PC-9 (cell line): ENCODE measurements at regions of chr12 and their contacts with region 1.

Region 1: GRCh38 chr12:62785941-62786559 is 148.9 kb downstream of the PPM1H start:
- DNase-seq: peak; percentile 70 to 100
- H3K4me3 ChIP-seq: peak overlapping the region; percentile 17; the same call in 1 of the 2 replicates
- H3K27ac ChIP-seq: peak overlapping the region; percentile 98
- H3K4me1 ChIP-seq: peaks cover 55% of the 10 kb centered on the region
- H3K27me3 ChIP-seq: no peaks in the 10 kb centered on the region
- CTCF ChIP-seq: no peak

Region 2: GRCh38 chr12:62724947-62725447 is 61.1 kb before region 1 on chr12:
- CTCF ChIA-PET with region 1: no interaction called
- POLR2A ChIA-PET with region 1: no interaction called
- intact Hi-C with region 1: loop called (anchors 2 kb)
- DNase-seq: peak; percentile 78 to 99
- H3K4me3 ChIP-seq: peak overlapping the region; percentile 1; the same call in 1 of the 2 replicates
- H3K27ac ChIP-seq: peak overlapping the region; percentile 99
- H3K4me1 ChIP-seq: peaks cover 71% of the 10 kb centered on the region
- H3K27me3 ChIP-seq: no peaks in the 10 kb centered on the region
- CTCF ChIP-seq: no peak

Region 3: GRCh38 chr12:62732861-62733427 is 53.1 kb before region 1 on chr12:
- CTCF ChIA-PET with region 1: no interaction called
- POLR2A ChIA-PET with region 1: interaction called, 8 read pairs
- intact Hi-C with region 1: loop called (anchors 2 kb)
- DNase-seq: peak; percentile 41 to 79
- H3K4me3 ChIP-seq: peak overlapping the region; percentile 18; the same call in 1 of the 2 replicates
- H3K27ac ChIP-seq: peak overlapping the region; percentile 96
- H3K4me1 ChIP-seq: peaks cover 86% of the 10 kb centered on the region
- H3K27me3 ChIP-seq: no peaks in the 10 kb centered on the region
- CTCF ChIP-seq: no peak

Region 4: DNA sequence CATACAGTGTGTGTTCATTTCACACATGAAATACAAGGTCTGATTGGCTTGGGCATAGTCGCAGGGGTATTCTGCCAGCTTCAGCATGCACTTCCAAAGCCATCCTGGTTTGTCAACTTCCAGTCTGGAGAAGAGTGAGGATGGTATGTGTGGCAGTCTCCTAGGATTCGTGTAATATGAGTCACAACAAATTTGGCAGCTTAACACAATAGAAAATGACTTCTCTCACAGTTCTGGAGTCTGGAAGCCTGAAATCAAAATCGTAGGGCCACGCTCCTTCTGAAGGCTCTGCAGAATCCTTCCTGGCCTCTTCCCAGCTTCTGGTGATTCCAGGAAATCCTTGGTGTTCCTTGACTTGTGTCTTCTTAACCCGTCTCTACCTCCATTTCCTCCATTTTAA is 18.6 kb before region 1 on chr12:
- CTCF ChIA-PET with region 1: no interaction called
- POLR2A ChIA-PET with region 1: interaction called, 10 read pairs
- intact Hi-C with region 1: no loop called
- DNase-seq: peak; percentile 20 to 58
- H3K4me3 ChIP-seq: no peak overlapping the region
- H3K27ac ChIP-seq: peak overlapping the region; percentile 38
- H3K4me1 ChIP-seq: peaks cover 45% of the 10 kb centered on the region
- H3K27me3 ChIP-seq: no peaks in the 10 kb centered on the region
- CTCF ChIP-seq: no peak

Region 5: GRCh38 chr12:62866451-62867082 is 80.5 kb after region 1 on chr12:
- CTCF ChIA-PET with region 1: no interaction called
- POLR2A ChIA-PET with region 1: no interaction called
- intact Hi-C with region 1: no loop called
- DNase-seq: peak; percentile 53 to 87
- H3K4me3 ChIP-seq: peak overlapping the region; percentile 19; the same call in 1 of the 2 replicates
- H3K27ac ChIP-seq: peak overlapping the region; percentile 85
- H3K4me1 ChIP-seq: peaks cover 53% of the 10 kb centered on the region
- H3K27me3 ChIP-seq: no peaks in the 10 kb centered on the region
- CTCF ChIP-seq: no peak

Region 6: DNA sequence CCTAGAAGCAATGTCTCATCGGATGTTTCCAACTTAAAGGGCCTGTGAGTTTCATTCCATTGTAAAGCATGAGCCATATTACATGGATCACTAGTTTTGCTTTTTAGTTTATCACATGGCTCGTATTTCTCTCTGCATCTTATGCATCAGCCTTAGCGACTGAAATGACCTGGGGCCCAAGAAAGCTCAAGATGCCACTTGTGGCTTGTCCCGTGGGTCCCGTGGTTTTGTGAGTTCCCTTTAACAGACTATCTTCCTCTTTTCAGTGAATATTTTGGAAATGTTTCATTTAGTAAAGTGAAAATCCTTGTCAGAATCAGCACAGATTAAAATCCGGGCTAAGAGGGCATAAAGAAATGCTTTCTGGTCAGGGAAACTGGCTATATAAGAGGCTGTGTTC is 235.1 kb after region 1 on chr12:
- CTCF ChIA-PET with region 1: no interaction called
- POLR2A ChIA-PET with region 1: no interaction called
- intact Hi-C with region 1: no loop called
- DNase-seq: no peak
- H3K4me3 ChIP-seq: no peak overlapping the region
- H3K27ac ChIP-seq: no peak overlapping the region
- H3K4me1 ChIP-seq: no peaks in the 10 kb centered on the region
- H3K27me3 ChIP-seq: no peaks in the 10 kb centered on the region
- CTCF ChIP-seq: no peak

Region 7: DNA sequence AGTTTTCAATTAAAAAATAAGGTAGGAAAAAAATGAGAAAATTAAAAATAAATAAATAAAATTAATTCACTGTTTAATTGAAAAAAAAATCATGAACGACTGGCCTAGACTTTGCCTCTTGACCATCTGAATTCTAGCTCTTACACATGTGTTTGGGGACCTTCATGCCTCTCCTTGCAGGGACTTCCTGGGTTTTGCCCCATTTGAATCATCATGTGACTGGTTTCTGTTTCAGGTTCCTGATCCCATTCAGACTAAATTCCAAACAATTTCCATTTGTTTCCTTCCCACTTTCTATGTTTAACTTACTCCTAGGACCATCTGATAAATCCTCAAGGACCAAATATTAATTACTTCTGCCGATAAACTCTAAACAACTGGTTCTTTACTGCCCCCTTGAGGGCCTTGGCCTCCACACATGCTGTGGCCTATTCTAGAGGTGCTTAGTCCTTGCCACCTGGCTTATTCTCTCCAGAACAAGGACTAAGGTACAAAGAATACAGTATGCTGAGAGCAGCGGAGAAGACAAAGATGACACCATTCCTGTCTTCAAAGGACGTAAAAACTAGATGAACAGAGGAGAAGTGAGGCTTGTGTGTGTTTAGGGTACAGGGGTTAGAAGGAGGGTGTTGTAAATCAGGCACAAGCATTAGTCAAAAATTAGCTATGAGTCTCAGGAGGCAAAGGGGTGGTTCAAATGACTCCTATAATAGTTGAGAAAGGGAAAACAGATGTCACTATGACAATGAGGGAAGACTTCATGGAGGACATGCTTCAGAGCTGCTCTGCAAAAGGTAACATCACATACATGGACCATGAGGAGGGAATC is 490.7 kb after region 1 on chr12:
- CTCF ChIA-PET with region 1: no interaction called
- POLR2A ChIA-PET with region 1: no interaction called
- intact Hi-C with region 1: no loop called
- DNase-seq: peak in 1 of 2 experiments; percentile 25
- H3K4me3 ChIP-seq: no peak overlapping the region
- H3K27ac ChIP-seq: no peak overlapping the region
- H3K4me1 ChIP-seq: no peaks in the 10 kb centered on the region
- H3K27me3 ChIP-seq: no peaks in the 10 kb centered on the region
- CTCF ChIP-seq: peak; percentile 81